Vagina (tissue), 2 donors: ENCODE measurements at regions of chr11 and their contacts with region 1.

Region 1: DNA sequence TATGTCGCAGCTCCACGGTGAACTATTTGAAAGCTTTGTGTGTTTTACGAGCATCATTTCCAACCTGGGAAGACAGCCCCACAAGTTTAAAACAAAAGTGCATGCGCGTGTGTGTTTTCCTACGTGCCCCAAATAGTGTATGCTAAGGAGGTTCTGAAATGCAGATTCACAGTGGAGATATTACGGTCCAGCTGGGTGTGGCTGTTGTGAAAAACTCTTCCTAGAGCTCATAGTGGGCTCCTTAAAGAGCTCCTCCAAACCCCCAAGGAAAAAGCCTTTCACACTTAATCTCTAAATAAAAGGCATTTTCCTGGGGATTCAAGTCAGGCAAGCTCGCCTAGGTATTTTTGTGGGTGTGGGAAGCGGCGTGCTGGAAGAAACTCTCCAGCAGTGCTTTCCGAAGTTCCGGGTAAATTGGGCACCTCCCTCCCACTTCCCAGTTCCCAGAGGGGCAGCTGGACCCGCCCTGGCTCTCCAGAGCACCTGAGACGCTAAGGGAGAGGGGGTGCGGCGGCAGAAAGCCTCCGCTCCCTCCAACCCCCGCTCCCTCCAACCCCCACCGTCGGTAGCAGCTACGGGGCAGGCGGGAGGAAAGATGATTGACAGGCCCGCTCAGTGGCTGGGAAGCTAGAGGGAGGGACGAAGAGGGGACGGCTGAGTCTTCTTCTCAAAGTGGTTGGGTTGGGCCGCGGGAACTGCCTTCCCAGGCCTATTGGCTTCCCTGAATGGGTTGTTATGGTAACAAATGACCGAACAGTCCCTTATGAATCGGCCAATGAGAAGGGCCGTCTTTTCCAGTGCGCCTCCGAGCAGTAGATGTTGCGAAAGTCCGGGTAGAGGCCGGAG is 558 bp upstream of the PCF11 start:
- DNase-seq: peak; percentile 100
- H3K4me3 ChIP-seq: peak overlapping the region; percentile 79 to 93
- H3K27ac ChIP-seq: peak overlapping the region; percentile 99
- H3K4me1 ChIP-seq: peaks cover 27% of the 10 kb centered on the region
- H3K27me3 ChIP-seq: no peaks in the 10 kb centered on the region
- CTCF ChIP-seq: no peak
- POLR2A ChIP-seq: peak; percentile 86 to 99

Region 2: GRCh38 chr11:83071567-83072349 is 84.6 kb before region 1 on chr11 and contains the start of gene RAB30:
- intact Hi-C with region 1: loop called (anchors 2 kb)
- DNase-seq: peak; percentile 99 to 100
- H3K4me3 ChIP-seq: peak within 1 kb of the TSS; percentile 86 to 88
- H3K27ac ChIP-seq: peak within 1 kb of the TSS; percentile 93
- H3K4me1 ChIP-seq: peaks cover 42% of the 10 kb centered on the region
- H3K27me3 ChIP-seq: no peaks in the 10 kb centered on the region
- CTCF ChIP-seq: no peak
- POLR2A ChIP-seq: peak; percentile 3 to 82
- total RNA-seq, gene RAB30: 10.8 TPM